ENCODE measurements at regions of chr2 and their contacts with region 1.

Region 1: DNA sequence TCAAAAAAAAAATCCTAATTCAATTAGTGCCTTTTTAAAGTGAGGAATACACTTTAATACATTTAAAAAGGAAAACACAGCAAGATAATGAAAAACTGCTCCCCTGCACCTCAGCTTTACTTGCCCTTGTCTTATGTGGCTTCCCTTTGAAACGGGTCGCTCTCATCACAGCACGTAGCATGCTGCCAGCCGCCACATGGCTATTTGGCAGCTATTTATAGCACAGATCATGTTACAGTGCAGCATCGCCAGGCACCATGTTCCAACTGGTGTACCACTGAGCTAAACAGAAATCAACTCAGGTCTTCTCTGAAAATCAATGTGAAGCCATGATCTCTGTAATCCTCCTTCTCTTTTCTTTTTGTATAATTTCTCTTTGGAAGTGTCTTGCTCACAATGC is 65.1 kb downstream of the TMEM182 start:
- DNase-seq: peak; percentile 18
- H3K4me3 ChIP-seq: no peak overlapping the region
- CTCF ChIP-seq: no peak

Region 2: GRCh38 chr2:102895399-102895798 is 68.5 kb after region 1 on chr2:
- in situ Hi-C with region 1: loop called (anchors 5 kb)
- DNase-seq: no peak
- H3K4me3 ChIP-seq: no peak overlapping the region
- CTCF ChIP-seq: no peak

Measured in astrocyte of the cerebellum (primary cell).